B cell (primary cell): ENCODE measurements at regions of chr16 and their contacts with region 1.

Region 1: DNA sequence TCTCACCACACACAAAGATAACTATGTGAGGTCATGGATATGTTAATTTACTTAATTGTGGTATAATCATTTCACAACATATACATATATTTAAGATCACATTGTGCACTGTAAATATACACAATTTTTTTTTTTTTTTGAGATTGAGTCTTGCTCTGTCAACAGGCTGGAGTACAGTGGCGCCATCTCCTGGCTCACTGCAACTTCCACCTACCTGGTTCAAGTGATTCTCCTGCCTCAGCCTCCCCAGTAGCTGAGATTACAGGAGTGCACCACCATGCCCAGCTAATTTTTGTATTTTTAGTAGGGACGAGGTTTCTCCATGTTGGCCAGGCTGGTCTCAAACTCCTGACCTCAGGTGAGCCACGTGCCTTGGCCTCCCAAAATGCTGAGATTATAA is 11.5 kb upstream of the PRSS54 start:
- DNase-seq: peak; percentile 56
- ATAC-seq: no peak
- H3K4me3 ChIP-seq: no peak overlapping the region
- H3K4me3 Mint-ChIP-seq: no peak overlapping the region
- H3K27ac ChIP-seq: no peak overlapping the region
- H3K27ac Mint-ChIP-seq: no peak overlapping the region
- H3K4me1 ChIP-seq: no peaks in the 10 kb centered on the region
- H3K4me1 Mint-ChIP-seq: no peaks in the 10 kb centered on the region
- H3K27me3 ChIP-seq: no peaks in the 10 kb centered on the region
- H3K27me3 Mint-ChIP-seq: peaks cover 15% of the 10 kb centered on the region
- CTCF ChIP-seq: peak; percentile 73

Region 2: GRCh38 chr16:58212824-58213655 is 93.3 kb before region 1 on chr16:
- CTCF ChIA-PET with region 1: no interaction called
- POLR2A ChIA-PET with region 1: no interaction called
- intact Hi-C with region 1: loop called (anchors 10 kb)
- DNase-seq: peak; percentile 50
- ATAC-seq: peak; percentile 45
- H3K4me3 ChIP-seq: no peak overlapping the region
- H3K4me3 Mint-ChIP-seq: no peak overlapping the region
- H3K27ac ChIP-seq: no peak overlapping the region
- H3K27ac Mint-ChIP-seq: no peak overlapping the region
- H3K4me1 ChIP-seq: peaks cover 0 to 3% of the 10 kb centered on the region in 2 donors
- H3K4me1 Mint-ChIP-seq: peaks cover 22% of the 10 kb centered on the region
- H3K27me3 ChIP-seq: peaks cover 0 to 6% (median 0%) of the 10 kb centered on the region in 4 experiments
- H3K27me3 Mint-ChIP-seq: peaks cover 21% of the 10 kb centered on the region
- CTCF ChIP-seq: no peak

Region 3: GRCh38 chr16:58329147-58329546 is 22.8 kb after region 1 on chr16:
- CTCF ChIA-PET with region 1: no interaction called
- POLR2A ChIA-PET with region 1: no interaction called
- intact Hi-C with region 1: no loop called
- DNase-seq: no peak
- ATAC-seq: no peak
- H3K4me3 ChIP-seq: no peak overlapping the region
- H3K4me3 Mint-ChIP-seq: no peak overlapping the region
- H3K27ac ChIP-seq: no peak overlapping the region
- H3K27ac Mint-ChIP-seq: no peak overlapping the region
- H3K4me1 ChIP-seq: no peaks in the 10 kb centered on the region
- H3K4me1 Mint-ChIP-seq: no peaks in the 10 kb centered on the region
- H3K27me3 ChIP-seq: peaks cover 0 to 8% (median 2%) of the 10 kb centered on the region in 4 experiments
- H3K27me3 Mint-ChIP-seq: peaks cover 30% of the 10 kb centered on the region
- CTCF ChIP-seq: no peak

Region 4: GRCh38 chr16:58360041-58360634 is 53.8 kb after region 1 on chr16:
- CTCF ChIA-PET with region 1: no interaction called
- POLR2A ChIA-PET with region 1: no interaction called
- intact Hi-C with region 1: no loop called
- DNase-seq: no peak
- ATAC-seq: no peak
- H3K4me3 ChIP-seq: no peak overlapping the region
- H3K4me3 Mint-ChIP-seq: no peak overlapping the region
- H3K27ac ChIP-seq: no peak overlapping the region
- H3K27ac Mint-ChIP-seq: no peak overlapping the region
- H3K4me1 ChIP-seq: no peaks in the 10 kb centered on the region
- H3K4me1 Mint-ChIP-seq: no peaks in the 10 kb centered on the region
- H3K27me3 ChIP-seq: peaks cover 0 to 11% (median 0%) of the 10 kb centered on the region in 4 experiments
- H3K27me3 Mint-ChIP-seq: peaks cover 33% of the 10 kb centered on the region
- CTCF ChIP-seq: no peak